ENCODE measurements at regions of chr15 and their contacts with region 1.

Region 1: GRCh38 chr15:66946578-66947164 is 118.7 kb upstream of the SMAD3 start:
- DNase-seq: peak; percentile 80
- H3K4me3 Mint-ChIP-seq: no peak overlapping the region
- H3K27ac Mint-ChIP-seq: no peak overlapping the region
- H3K4me1 Mint-ChIP-seq: peaks cover 13% of the 10 kb centered on the region
- H3K27me3 Mint-ChIP-seq: peaks cover 25% of the 10 kb centered on the region

Region 2: DNA sequence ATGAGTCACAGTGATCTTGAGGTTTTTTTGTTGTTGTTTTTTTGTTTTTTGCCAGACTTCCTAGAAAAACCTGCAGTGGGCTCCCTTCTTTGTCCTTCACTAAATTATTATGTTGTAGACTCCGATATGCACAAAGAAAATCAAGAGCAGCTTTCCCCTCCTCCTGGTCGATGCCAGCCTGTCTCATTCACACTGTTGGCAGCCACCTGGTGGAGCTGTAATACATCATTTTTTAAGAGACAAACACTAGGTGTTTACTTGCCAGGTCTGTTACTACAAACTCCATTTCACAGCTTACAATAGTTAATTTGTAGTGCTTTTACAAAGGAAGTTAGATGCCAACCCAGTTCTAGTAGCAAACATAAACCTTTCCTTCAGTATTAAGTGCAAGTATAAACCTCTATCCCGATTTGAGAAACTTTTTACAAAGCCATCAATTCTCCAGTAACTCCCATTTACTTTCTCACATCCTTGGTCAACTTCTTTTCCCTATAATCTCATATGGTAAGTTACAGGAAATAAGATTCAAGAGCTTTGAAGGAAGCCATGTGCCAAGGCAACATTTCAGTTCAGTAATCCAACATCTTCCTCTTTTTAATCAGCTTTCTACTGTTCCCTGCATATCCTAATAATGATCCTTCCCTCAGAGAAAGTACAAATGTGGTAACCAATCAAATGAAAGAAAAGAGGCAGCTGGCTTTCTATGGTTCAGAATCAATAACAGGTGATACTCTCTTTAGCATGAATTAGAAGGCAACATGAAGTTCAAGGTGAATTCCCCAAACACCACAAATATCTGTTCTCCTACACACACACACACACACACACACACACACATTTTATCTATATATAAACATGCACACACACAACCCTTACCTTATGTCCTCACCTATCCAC is 293.8 kb after region 1 on chr15:
- CTCF ChIA-PET with region 1: interaction called, 11 read pairs
- DNase-seq: peak; percentile 51
- H3K4me3 Mint-ChIP-seq: peak overlapping the region; percentile 9
- H3K27ac Mint-ChIP-seq: peak overlapping the region; percentile 90
- H3K4me1 Mint-ChIP-seq: peaks cover 47% of the 10 kb centered on the region
- H3K27me3 Mint-ChIP-seq: no peaks in the 10 kb centered on the region

Region 3: GRCh38 chr15:67303490-67304363 is 357.1 kb after region 1 on chr15:
- CTCF ChIA-PET with region 1: interaction called, 63 read pairs
- DNase-seq: peak; percentile 38
- H3K4me3 Mint-ChIP-seq: no peak overlapping the region
- H3K27ac Mint-ChIP-seq: no peak overlapping the region
- H3K4me1 Mint-ChIP-seq: no peaks in the 10 kb centered on the region
- H3K27me3 Mint-ChIP-seq: peaks cover 3% of the 10 kb centered on the region

Region 4: GRCh38 chr15:67433495-67434099 is 486.9 kb after region 1 on chr15:
- CTCF ChIA-PET with region 1: interaction called, 35 read pairs
- DNase-seq: peak; percentile 35
- H3K4me3 Mint-ChIP-seq: no peak overlapping the region
- H3K27ac Mint-ChIP-seq: no peak overlapping the region
- H3K4me1 Mint-ChIP-seq: no peaks in the 10 kb centered on the region
- H3K27me3 Mint-ChIP-seq: no peaks in the 10 kb centered on the region

Measured in activated naive CD4-positive, alpha-beta T cell treated with anti-CD3 and anti-CD28 coated beads, Interleukin-2, amount 10 ng/mL, durations not matched to agents 7 days and 5 days (primary cell).